OCI-LY7 (cell line): ENCODE measurements at regions of chr7 and their contacts with region 1.

Region 1: GRCh38 chr7:28573059-28573553 is 160.8 kb downstream of the CREB5 start:
- DNase-seq: peak; percentile 57
- H3K4me3 ChIP-seq: peak overlapping the region; percentile 69
- H3K27ac ChIP-seq: peak overlapping the region; percentile 69
- H3K4me1 ChIP-seq: peaks cover 83% of the 10 kb centered on the region
- CTCF ChIP-seq: no peak

Region 2: GRCh38 chr7:28155019-28155660 is 418.0 kb before region 1 on chr7:
- CTCF ChIA-PET with region 1: no interaction called
- POLR2A ChIA-PET with region 1: interaction called, 3 read pairs
- intact Hi-C with region 1: loop called (anchors 5 kb)
- DNase-seq: peak; percentile 84
- H3K4me3 ChIP-seq: peak overlapping the region; percentile 55
- H3K27ac ChIP-seq: peak overlapping the region; percentile 97
- H3K4me1 ChIP-seq: peaks cover 99% of the 10 kb centered on the region
- CTCF ChIP-seq: no peak

Region 3: GRCh38 chr7:28481091-28481926 is 91.8 kb before region 1 on chr7:
- CTCF ChIA-PET with region 1: no interaction called
- POLR2A ChIA-PET with region 1: interaction called, 4 read pairs
- intact Hi-C with region 1: loop called (anchors 2 kb)
- DNase-seq: peak; percentile 49
- H3K4me3 ChIP-seq: peak overlapping the region; percentile 12
- H3K27ac ChIP-seq: no peak overlapping the region
- H3K4me1 ChIP-seq: peaks cover 23% of the 10 kb centered on the region
- CTCF ChIP-seq: no peak

Region 4: DNA sequence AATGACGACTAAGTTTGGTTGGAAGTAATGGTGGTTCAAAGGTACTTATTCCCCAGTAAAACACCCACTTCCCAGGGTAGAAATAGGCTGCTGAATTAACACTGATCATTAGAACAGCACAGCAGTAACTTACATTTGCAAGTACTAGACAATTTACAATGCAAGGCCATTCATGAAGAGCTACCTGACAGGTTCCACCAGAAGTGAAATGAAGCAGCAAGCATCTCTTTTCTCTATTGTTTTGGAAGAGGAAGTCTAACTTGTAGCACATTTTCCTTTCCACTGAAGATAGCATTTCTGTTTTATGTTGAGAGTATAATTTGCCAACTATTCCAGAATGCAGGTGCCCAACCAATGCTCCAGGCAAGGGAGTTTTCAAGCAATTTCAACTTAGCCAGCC is 14.9 kb before region 1 on chr7:
- CTCF ChIA-PET with region 1: no interaction called
- POLR2A ChIA-PET with region 1: interaction called, 18 read pairs
- intact Hi-C with region 1: no loop called
- DNase-seq: peak; percentile 19
- H3K4me3 ChIP-seq: no peak overlapping the region
- H3K27ac ChIP-seq: no peak overlapping the region
- H3K4me1 ChIP-seq: peaks cover 6% of the 10 kb centered on the region
- CTCF ChIP-seq: no peak

Region 5: DNA sequence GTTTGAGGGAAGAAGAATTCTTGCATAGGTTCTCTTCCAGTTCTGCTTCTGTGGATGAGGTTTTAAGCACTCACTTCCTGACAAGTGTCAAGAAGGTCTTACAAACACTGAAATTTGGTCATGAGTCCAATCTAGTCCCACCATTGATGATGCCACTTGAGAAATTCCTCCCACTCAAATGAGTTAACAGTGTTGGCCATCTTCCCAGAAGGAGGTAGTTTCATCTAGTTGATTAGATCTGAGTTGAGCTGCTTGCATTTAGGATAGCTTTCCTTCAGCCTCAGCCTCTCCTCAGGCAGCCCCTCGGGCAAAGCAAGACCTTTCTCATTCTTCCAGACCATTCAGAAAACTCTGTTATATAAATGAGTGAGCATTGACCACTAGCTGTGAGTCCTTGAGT is 195.5 kb after region 1 on chr7:
- CTCF ChIA-PET with region 1: no interaction called
- POLR2A ChIA-PET with region 1: no interaction called
- intact Hi-C with region 1: no loop called
- DNase-seq: no peak
- H3K4me3 ChIP-seq: no peak overlapping the region
- H3K27ac ChIP-seq: no peak overlapping the region
- H3K4me1 ChIP-seq: no peaks in the 10 kb centered on the region
- CTCF ChIP-seq: no peak

Region 6: GRCh38 chr7:28815369-28815927 is 242.3 kb after region 1 on chr7:
- CTCF ChIA-PET with region 1: no interaction called
- POLR2A ChIA-PET with region 1: interaction called, 3 read pairs
- intact Hi-C with region 1: loop called (anchors 5 kb)
- DNase-seq: no peak
- H3K4me3 ChIP-seq: peak overlapping the region; percentile 40
- H3K27ac ChIP-seq: peak overlapping the region; percentile 27
- H3K4me1 ChIP-seq: peaks cover 35% of the 10 kb centered on the region
- CTCF ChIP-seq: no peak

Region 7: DNA sequence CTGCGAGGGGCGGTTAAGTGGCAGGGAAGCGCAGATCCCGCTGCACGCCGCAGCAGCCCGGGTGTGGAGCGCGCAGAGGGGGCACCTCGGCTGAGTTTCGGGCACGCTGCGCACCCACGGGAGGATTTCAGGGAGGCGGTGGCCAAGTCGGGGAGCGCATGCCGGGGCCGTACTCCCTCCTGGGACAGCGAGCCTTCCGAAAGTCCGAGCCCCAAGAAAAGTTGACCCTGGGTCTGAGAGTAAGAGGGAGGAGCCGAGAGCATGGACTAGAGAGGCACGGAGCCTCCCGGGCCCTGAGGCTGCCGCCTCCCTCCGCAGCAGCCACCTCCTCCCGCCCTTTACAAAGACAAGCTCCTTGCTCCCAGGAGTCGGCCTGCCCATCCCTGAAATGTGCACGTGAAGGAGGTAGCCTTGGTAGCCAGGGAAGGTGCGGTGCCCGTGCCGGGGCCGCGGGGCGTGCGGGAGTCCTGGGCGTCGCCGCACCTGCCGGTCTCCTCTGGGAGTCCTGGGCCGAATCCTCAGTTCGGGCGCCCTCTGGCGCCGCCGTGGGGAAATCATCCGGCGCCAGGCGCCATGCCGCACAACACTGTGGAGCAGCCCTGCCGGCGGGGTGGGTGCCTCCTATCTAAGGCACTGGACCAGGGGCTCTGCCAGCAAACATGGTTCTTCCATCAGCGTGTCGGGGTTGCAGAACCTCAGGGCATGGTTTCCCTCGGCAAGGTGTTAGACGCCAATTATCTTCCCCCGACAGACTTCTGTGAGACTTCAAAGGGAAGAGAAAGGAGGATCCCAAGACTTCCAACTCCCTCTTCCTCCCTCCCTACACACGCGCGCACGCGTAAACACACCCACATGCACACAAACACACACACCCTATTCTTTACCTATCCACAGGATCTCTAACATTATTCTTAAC is 281.0 kb after region 1 on chr7:
- CTCF ChIA-PET with region 1: no interaction called
- POLR2A ChIA-PET with region 1: no interaction called
- intact Hi-C with region 1: loop called (anchors 5 kb)
- DNase-seq: peak; percentile 72
- H3K4me3 ChIP-seq: peak overlapping the region; percentile 45
- H3K27ac ChIP-seq: no peak overlapping the region
- H3K4me1 ChIP-seq: peaks cover 7% of the 10 kb centered on the region
- CTCF ChIP-seq: peak; percentile 84